Activated CD4-positive, alpha-beta memory T cell treated with anti-CD3 and anti-CD28 coated beads for 36 hours (primary cell): ENCODE measurements at regions of chr21 and their contacts with region 1.

Region 1: DNA sequence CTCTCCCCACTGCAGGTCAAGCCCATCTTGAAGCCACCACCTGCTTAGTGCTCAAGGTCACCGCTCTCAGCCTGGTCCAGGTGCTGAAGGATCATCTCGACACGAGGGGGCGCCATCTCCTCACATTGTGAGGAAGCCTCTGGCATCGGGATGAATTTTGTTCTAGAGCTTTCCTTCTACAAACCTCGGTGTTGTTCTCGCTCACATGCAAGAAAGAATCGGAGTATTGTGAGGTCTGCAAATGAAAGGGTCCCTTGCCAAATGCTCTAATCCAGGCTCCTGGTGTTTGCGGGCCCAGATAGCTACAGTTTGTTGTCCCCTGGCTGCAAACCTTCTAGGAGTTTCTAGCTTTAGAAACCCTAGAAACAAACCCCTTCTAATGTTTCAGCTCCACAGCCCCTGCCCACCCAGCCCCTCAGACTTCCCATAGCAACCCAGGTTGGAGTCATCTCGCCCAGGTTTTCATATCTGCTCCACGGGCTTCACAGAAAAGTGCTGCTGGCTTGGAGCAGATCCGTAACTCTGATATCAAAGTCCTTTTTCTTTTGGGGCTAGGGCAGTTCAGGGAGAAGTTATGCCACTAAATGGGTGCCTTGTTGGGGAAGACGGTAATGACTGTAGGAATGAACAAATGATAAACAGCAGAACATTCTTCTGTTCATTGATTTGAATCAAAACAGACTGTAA is 8.6 kb upstream of the ATP5PO start:
- DNase-seq: peak; percentile 93
- H3K4me3 Mint-ChIP-seq: no peak overlapping the region
- H3K27ac Mint-ChIP-seq: peak overlapping the region; percentile 5
- H3K4me1 Mint-ChIP-seq: peaks cover 10% of the 10 kb centered on the region
- H3K27me3 Mint-ChIP-seq: no peaks in the 10 kb centered on the region

Region 2: DNA sequence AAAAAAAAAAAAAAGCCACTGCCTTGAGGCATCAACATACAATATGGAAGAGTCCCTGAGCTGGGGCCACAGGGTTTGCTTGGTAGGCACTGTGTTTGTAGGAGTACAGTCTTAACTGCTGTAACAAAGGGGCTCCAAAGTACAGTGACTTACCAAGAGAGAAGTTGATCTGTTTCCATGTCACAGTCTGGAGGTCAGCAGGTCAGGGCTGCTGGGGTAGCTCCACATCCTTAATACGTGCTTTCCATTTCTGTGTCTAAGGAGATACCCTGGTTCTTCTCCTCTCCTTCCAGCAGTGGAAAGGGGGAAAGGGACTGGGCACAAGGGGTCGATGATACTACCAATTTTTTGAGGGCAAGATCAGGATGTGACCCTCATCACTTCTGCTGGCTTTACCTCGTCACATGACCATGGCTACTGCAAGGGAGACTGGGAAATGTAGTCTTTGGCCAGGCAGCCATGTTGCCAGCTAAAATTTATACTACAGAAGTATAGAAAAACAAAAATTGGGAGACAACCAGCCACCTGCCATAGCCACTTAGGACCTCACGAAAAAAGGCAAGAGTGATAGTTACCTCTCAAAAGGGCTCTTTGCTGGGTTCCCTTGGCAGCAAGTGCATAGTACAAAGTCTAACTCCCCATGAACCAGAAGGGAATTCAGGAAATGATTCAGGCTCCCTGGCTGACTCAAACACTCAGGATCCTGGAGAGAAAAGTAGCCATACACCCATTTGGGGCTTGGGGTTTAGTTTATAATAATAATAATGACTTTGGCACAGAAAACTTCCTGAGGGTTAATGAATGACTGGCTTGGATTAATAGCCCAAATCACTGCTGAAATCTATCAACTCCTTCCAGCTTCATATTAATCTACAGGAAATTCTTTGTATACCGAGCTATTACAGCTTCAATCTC is 44.1 kb after region 1 on chr21:
- CTCF ChIA-PET with region 1: interaction called, 34 read pairs
- POLR2A ChIA-PET with region 1: no interaction called
- intact Hi-C with region 1: no loop called
- DNase-seq: peak; percentile 25
- H3K4me3 Mint-ChIP-seq: no peak overlapping the region
- H3K27ac Mint-ChIP-seq: no peak overlapping the region
- H3K4me1 Mint-ChIP-seq: peaks cover 31% of the 10 kb centered on the region
- H3K27me3 Mint-ChIP-seq: no peaks in the 10 kb centered on the region

Region 3: GRCh38 chr21:34073032-34073869 is 149.0 kb after region 1 on chr21 and contains the starts of genes MRPS6 and SLC5A3:
- CTCF ChIA-PET with region 1: interaction called, 40 read pairs
- POLR2A ChIA-PET with region 1: interaction called, 8 read pairs
- intact Hi-C with region 1: no loop called
- DNase-seq: peak; percentile 81
- H3K4me3 Mint-ChIP-seq: peak within 1 kb of the TSS; percentile 95
- H3K27ac Mint-ChIP-seq: peak within 1 kb of the TSS; percentile 87
- H3K4me1 Mint-ChIP-seq: peaks cover 41% of the 10 kb centered on the region
- H3K27me3 Mint-ChIP-seq: no peaks in the 10 kb centered on the region
- total RNA-seq, gene MRPS6: 114 to 117 TPM
- total RNA-seq, gene SLC5A3: 25.7 to 27.5 TPM

Region 4: GRCh38 chr21:34100790-34101189 is 176.6 kb after region 1 on chr21:
- CTCF ChIA-PET with region 1: interaction called, 21 read pairs
- POLR2A ChIA-PET with region 1: no interaction called
- intact Hi-C with region 1: no loop called
- DNase-seq: no peak
- H3K4me3 Mint-ChIP-seq: no peak overlapping the region
- H3K27ac Mint-ChIP-seq: peak overlapping the region; percentile 6
- H3K4me1 Mint-ChIP-seq: peaks cover 89% of the 10 kb centered on the region
- H3K27me3 Mint-ChIP-seq: no peaks in the 10 kb centered on the region

Region 5: DNA sequence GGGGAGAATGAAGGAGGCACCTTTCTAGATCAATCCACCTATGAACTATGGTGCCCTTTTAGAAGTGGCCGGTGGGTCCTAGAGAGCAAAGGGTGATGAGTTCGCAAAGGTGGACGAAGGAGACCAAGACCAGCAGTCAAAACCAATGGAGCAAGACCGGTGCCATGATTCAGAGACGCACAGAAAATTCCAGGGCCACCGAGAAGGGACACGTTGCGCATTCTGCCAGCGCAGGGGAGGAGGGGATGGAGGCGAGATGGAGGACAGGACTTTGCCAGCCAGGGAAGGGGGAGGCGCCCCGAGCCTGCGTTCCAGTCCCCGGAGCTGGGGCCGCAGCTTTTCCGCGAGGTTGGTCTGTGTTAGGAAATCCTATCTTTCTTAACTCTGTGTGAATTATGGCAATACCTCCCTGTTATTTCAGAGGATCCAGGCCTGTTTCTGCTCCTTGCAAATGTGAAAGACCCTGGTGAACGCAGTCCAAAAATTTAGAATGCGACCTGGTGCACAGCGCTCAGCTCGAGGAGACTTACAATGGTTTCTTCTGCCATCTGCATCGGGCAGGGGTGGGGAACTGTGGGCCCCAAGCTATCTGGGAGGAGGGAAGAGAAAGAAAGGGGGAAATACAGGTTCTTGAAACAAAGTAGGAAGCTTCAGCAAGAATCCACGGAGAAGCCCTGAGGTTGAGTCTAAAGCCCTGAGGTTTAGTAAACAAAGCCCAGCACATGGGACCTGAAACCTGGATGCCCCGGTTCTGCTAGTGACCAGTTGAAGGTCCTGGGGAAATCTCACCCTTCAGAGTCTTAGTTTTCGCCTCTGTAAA is 278.5 kb after region 1 on chr21:
- CTCF ChIA-PET with region 1: interaction called, 41 read pairs
- POLR2A ChIA-PET with region 1: no interaction called
- intact Hi-C with region 1: loop called (anchors 5 kb)
- DNase-seq: no peak
- H3K4me3 Mint-ChIP-seq: no peak overlapping the region
- H3K27ac Mint-ChIP-seq: no peak overlapping the region
- H3K4me1 Mint-ChIP-seq: peaks cover 25% of the 10 kb centered on the region
- H3K27me3 Mint-ChIP-seq: peaks cover 3% of the 10 kb centered on the region

Region 6: DNA sequence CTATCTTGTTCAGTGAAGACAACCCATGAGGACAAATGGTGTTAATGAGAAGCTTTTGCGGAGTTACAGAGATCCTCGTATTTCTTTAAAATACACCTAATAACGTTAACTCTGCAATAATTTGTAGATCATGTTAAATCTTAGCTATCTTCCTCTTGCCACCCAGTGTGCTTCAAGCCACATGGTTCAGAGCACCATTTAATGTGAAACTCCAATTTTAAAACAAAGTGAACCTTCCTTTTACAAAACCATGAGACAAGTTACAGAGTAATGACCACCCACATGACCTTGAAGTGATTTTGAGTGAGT is 437.9 kb after region 1 on chr21:
- CTCF ChIA-PET with region 1: interaction called, 19 read pairs
- POLR2A ChIA-PET with region 1: no interaction called
- intact Hi-C with region 1: no loop called
- DNase-seq: no peak
- H3K4me3 Mint-ChIP-seq: no peak overlapping the region
- H3K27ac Mint-ChIP-seq: no peak overlapping the region
- H3K4me1 Mint-ChIP-seq: peaks cover 5% of the 10 kb centered on the region
- H3K27me3 Mint-ChIP-seq: peaks cover 9% of the 10 kb centered on the region